MCF 10A (cell line): ENCODE measurements at regions of chr12 and their contacts with region 1.

Region 1: DNA sequence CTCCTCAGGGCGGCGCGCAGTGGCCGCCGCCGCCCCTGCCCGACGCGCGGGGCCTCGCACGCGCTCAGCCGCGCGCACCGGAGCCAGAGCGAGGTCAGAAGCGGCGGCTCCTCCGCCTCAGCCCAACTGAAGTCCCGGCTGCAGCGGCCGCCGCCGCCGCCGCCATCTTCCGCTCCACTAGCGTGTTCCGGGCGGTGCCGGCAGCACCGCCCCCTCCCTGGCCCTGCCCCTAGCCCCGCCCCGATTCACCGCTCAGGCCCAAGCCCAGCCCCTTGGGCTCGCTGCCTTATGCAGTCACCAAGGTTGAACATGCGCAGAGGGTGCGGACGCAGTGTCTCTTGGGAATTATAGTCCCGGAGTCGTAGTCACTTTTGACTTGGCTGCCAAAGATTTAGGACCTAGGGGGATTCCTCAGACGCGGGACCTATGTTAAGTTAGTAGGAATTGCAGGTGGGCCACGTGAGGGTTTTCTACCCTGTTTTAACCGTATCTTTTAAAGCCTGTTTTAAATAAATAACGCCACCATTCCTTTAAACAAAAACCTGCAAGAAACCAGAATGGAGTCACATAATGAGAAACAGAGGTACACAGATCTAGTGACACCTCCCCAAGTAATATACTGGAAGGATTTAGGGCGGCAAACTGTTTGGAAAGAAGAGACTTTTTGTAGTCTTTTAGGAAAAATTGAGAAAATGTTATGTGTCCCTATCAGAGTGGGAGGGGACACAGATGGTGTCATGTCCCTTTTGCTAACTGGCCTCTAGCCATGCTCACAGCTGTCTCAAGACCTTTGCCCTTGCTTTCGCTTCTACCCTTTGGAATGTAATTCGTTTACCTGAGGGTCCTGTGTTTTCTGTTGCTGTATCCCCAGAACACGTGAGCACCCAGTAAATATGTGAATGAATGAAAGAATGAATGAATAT is at the start of gene PPTC7:
- DNase-seq: peak; percentile 97
- H3K4me3 Mint-ChIP-seq: peak within 1 kb of the TSS; percentile 96
- H3K27ac Mint-ChIP-seq: peak within 1 kb of the TSS; percentile 81
- H3K4me1 Mint-ChIP-seq: peaks cover 10% of the 10 kb centered on the region
- H3K27me3 Mint-ChIP-seq: no peaks in the 10 kb centered on the region
- CTCF ChIP-seq: no peak
- total RNA-seq, gene PPTC7: 32.0 and 36.5 TPM in 2 replicates

Region 2: DNA sequence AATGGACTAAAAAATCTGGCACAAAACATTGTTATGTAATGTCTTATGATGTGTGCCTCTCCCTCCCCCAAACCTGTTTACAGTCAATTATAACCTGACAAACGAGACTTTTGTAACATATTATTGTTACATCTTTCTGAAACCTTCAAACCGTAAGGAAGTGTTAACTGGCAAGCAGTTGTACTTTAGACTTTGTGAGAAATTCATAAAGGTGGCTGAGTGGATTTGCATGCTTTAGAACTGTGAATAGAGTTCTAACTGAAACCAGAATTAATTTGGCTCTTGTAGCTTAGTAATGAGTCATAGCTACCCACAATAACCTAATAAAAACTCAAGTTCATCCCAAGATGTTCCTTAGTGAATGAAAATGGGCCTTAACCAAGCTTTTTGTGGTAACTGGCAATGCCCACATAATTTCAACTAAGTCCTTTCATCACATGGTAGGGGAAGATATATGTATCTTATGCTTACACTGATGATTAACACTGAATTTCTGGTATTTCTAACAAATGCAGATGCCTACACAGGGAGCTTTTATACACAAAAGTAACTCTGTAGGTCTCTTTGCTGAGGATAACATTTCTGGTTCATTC is 51.6 kb before region 1 on chr12:
- CTCF ChIA-PET with region 1: interaction called, 9 read pairs
- POLR2A ChIA-PET with region 1: interaction called, 283 read pairs
- intact Hi-C with region 1: loop called (anchors 5 kb)
- DNase-seq: peak; percentile 73
- H3K4me3 Mint-ChIP-seq: no peak overlapping the region
- H3K27ac Mint-ChIP-seq: peak overlapping the region; percentile 42
- H3K4me1 Mint-ChIP-seq: peaks cover 18% of the 10 kb centered on the region
- H3K27me3 Mint-ChIP-seq: no peaks in the 10 kb centered on the region
- CTCF ChIP-seq: no peak

Region 3: DNA sequence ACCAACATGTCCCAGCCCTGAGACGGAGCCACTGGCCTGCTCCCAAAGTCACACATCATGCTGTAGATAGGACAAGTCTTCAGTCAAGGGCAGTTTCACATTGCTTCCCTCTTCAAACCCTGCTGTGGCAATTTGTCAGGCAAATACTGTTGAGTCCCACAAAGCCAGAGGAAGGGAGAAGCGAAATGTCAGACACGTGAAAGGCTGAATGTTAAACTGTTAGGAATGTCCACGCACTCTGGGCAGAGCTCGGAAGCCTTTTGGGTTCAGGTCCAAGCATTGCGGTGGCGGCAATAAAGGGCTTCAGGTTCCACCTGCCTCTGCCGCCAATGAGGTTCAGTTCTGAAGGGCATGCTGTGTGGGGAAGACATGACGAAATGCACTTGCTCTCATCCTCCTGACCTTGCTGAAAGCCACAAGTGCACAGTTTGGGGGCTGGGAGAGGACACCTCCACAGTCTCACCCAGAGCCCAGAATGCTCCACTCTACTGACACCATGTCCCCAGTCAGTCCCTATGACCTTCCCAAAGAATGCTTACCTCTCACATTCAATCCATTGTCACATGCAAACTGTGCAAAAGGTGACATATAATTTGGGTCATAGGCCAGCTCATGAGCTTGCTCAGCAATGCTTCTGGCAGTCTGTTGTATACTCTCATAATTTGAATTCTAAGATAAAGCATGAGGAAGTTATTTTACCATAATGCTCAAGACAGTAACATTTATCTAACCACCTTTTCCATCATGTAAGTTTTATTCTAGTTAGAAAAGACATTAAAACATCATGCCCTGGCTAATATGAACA is 45.6 kb before region 1 on chr12:
- CTCF ChIA-PET with region 1: interaction called, 9 read pairs
- POLR2A ChIA-PET with region 1: interaction called, 336 read pairs
- intact Hi-C with region 1: loop called (anchors 5 kb)
- DNase-seq: peak; percentile 97
- H3K4me3 Mint-ChIP-seq: peak overlapping the region; percentile 47
- H3K27ac Mint-ChIP-seq: peak overlapping the region; percentile 69
- H3K4me1 Mint-ChIP-seq: peaks cover 40% of the 10 kb centered on the region
- H3K27me3 Mint-ChIP-seq: no peaks in the 10 kb centered on the region
- CTCF ChIP-seq: no peak

Region 4: DNA sequence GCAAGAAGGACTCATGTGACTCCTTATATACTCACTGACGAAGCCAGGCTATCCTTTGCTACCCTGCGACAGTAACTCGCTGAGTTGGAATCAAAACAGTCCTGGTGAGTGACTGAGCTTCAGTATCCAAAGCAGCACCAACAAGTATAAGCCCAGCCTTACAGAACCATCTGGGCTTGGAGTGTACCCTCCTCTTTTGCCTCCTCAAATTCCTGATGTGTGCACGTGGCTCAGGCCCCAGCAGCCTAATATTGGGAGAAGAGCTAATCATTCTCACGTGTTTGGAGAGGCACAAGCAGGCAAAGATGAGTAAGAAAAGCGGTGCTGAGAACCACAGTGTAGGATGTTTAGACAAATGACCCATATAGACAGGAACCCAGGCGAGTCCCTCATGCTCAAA is 34.7 kb before region 1 on chr12:
- CTCF ChIA-PET with region 1: interaction called, 35 read pairs
- POLR2A ChIA-PET with region 1: interaction called, 336 read pairs
- intact Hi-C with region 1: no loop called
- DNase-seq: no peak
- H3K4me3 Mint-ChIP-seq: peak overlapping the region; percentile 66
- H3K27ac Mint-ChIP-seq: peak overlapping the region; percentile 85
- H3K4me1 Mint-ChIP-seq: peaks cover 62% of the 10 kb centered on the region
- H3K27me3 Mint-ChIP-seq: no peaks in the 10 kb centered on the region
- CTCF ChIP-seq: no peak

Region 5: GRCh38 chr12:110555577-110556406 is 27.6 kb before region 1 on chr12:
- CTCF ChIA-PET with region 1: interaction called, 35 read pairs
- POLR2A ChIA-PET with region 1: interaction called, 336 read pairs
- intact Hi-C with region 1: loop called (anchors 1 kb)
- DNase-seq: peak; percentile 78
- H3K4me3 Mint-ChIP-seq: peak overlapping the region; percentile 49
- H3K27ac Mint-ChIP-seq: peak overlapping the region; percentile 97
- H3K4me1 Mint-ChIP-seq: peaks cover 55% of the 10 kb centered on the region
- H3K27me3 Mint-ChIP-seq: no peaks in the 10 kb centered on the region
- CTCF ChIP-seq: no peak

Region 6: DNA sequence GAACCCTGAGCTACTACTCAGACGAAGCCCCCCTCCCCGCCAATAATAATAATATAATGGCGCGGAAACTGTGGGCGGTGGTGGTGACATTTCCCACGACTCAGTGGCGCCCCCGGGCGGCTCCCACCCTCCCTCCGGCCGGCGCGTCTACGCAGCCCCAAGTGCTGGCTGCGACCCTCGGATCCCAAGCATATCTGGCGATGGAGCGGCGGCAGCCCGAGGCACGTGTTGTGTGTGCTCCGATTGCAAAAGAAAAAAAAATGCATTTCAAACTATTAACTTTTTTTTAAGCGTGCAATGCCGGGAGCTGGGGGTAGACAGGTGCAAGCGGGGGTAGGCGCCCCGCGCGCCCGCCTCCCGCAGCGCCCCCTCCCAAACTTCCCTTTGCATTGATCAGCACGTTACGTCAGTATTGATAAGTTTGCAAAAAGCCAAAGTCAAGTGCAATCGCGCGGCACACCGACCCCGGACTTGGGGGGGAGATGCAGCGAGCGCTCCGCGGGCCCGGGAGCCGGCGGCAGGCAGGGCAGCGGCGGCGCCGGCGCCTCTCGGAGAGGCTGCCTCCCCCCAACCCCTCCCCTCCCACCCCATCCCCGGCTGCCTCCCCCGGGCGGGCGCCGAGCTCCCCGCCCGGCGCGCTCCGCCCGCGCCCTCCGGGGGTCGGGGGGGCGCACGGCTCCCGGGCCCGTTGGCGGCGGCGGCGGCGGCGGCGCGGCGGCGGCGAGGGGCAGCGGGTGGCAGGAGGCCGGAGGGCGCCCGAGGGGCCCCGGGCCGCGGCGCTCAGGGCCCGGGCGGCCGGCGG is 450.1 kb after region 1 on chr12:
- CTCF ChIA-PET with region 1: no interaction called
- POLR2A ChIA-PET with region 1: no interaction called
- intact Hi-C with region 1: no loop called
- DNase-seq: no peak
- H3K4me3 Mint-ChIP-seq: peak overlapping the region; percentile 49
- H3K27ac Mint-ChIP-seq: no peak overlapping the region
- H3K4me1 Mint-ChIP-seq: peaks cover 12% of the 10 kb centered on the region
- H3K27me3 Mint-ChIP-seq: peaks cover 68% of the 10 kb centered on the region
- CTCF ChIP-seq: peak; percentile 22